ENCODE measurements at regions of chr17 and their contacts with region 1.

Region 1: DNA sequence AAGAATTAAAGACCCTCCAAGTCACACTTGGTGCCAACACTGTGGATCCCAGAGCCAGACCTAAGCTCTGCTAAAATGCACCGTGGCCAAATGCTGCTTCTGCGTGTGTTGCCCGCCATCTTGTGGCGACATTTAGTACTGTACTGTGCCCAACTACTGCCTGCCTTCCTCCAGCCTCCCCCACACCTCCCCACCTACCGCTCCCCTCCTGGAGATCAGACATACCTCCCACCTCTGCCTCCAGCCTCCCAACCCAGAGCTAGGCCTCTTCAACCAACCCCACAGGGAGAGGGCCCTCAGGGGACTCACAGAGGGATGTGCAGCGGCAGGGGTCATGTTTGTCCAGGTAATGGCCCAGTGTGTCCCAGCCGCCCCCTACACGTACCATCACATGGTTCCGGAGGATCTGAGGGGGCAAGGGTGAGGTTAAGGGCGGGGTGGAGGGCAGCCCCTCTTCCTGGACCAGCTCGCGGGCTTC is 5.5 kb downstream of the GAS2L2 start:
- DNase-seq: peak; percentile 86 to 95
- ATAC-seq: peak; percentile 71 to 91
- H3K4me3 ChIP-seq: no peak overlapping the region
- H3K27ac ChIP-seq: no peak overlapping the region
- H3K4me1 ChIP-seq: peaks cover 12% of the 10 kb centered on the region; the same call in 2 of the 3 replicates
- CTCF ChIP-seq: peak; percentile 96
- EP300 ChIP-seq: no peak
- POLR2A ChIP-seq: no peak
- RAD21 ChIP-seq: peak; percentile 97 to 99

Region 2: GRCh38 chr17:35531160-35531559 is 216.4 kb before region 1 on chr17:
- CTCF ChIA-PET with region 1: interaction called, 32 read pairs
- POLR2A ChIA-PET with region 1: no interaction called
- DNase-seq: no peak
- ATAC-seq: no peak
- H3K4me3 ChIP-seq: no peak overlapping the region
- H3K27ac ChIP-seq: no peak overlapping the region
- H3K4me1 ChIP-seq: no peaks in the 10 kb centered on the region
- CTCF ChIP-seq: no peak
- EP300 ChIP-seq: no peak
- POLR2A ChIP-seq: no peak
- RAD21 ChIP-seq: no peak

Region 3: DNA sequence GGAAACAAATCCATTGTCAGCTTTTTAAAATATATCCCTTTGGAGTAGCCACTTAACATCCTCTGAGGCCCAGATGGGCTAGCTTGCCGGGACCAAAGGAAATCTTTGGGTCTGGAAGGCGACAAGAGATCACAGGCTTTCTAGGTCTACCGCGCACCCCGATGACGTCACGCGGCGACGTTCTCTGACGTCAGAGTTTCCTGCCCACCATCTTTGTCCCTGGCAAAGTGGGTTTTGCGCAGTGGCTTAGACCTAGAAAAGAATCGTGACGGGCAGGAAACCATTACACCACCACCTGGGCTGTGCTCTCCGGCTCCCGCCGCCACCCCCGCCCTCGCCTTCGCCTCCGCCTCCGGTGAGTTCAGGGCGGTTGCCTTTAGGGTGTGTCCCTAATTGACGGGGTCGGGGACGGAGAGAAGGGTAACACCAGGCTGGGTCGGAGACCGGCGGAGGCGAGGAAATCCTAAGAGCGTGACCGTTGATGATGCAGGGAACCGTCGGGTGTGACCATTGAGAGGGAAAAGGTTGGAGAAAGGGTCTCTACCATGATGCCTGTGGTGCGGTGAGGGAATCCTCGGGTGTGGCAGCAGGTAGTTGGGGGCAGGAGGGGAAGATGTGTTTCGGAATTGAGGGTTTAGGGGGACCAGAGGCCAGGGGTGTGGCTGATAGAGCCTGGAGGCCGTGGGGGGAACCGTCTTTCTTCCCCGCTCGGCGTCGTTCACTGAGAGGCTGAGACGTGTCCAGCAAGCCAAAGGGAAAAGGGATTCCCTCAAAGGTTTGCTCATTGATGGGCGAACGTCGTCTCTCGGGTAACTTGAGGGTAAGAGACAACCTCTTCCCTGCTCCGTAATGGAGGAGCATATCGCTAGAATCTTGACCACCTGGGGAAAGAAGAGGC is 160.3 kb before region 1 on chr17 and contains the start of gene AP2B1:
- CTCF ChIA-PET with region 1: interaction called, 16 read pairs
- POLR2A ChIA-PET with region 1: interaction called, 4 read pairs
- DNase-seq: peak; percentile 95 to 99
- ATAC-seq: peak; percentile 88 to 91
- H3K4me3 ChIP-seq: peak within 1 kb of the TSS; percentile 73
- H3K27ac ChIP-seq: peak within 1 kb of the TSS; percentile 91 to 94
- H3K4me1 ChIP-seq: peaks cover 39% of the 10 kb centered on the region
- CTCF ChIP-seq: no peak
- EP300 ChIP-seq: no peak
- POLR2A ChIP-seq: peak; percentile 76
- RAD21 ChIP-seq: no peak
- polyA plus RNA-seq, gene AP2B1: 278 and 309 TPM in 2 replicates

Region 4: GRCh38 chr17:35630530-35631148 is 116.9 kb before region 1 on chr17:
- CTCF ChIA-PET with region 1: interaction called, 20 read pairs
- POLR2A ChIA-PET with region 1: no interaction called
- DNase-seq: peak in 1 of 2 experiments; percentile 9
- ATAC-seq: peak; percentile 24 to 51; a peak in 4 of 6 replicates
- H3K4me3 ChIP-seq: no peak overlapping the region
- H3K27ac ChIP-seq: no peak overlapping the region
- H3K4me1 ChIP-seq: peaks cover 16% of the 10 kb centered on the region; the same call in 2 of the 3 replicates
- CTCF ChIP-seq: no peak
- EP300 ChIP-seq: no peak
- POLR2A ChIP-seq: no peak
- RAD21 ChIP-seq: no peak

Region 5: DNA sequence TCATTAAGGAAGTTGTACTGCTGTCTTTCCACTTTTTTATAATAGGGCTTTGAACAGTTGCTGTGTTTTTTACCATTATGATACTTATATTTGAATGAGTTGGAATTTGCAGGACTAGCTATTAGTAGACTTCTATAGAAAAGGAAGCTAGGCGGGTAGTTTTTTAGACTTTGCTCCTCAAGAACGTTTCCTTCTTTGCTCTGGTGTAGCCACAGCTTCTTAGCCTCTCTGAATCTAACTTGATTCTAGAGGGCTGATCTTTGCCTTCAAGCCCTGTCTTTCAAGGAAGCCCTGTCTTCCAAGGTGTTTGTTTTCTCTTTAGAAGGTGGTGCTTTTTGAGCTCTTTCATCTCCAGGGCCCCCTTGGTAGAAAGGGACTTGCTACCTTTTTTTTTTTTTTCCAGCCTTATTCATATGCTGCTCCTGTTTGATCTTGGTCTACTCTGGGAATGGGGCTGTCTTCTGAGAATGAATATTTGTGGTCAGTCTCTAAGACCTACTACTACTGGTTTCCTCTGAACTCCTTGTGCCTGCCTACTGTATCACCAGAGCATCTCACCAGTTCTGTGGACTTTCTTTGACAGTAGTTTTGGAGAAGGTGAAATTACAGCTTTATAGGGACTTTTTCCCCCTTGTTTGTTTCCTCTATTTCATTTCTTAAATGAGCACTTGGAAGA is 68.4 kb before region 1 on chr17:
- CTCF ChIA-PET with region 1: interaction called, 13 read pairs
- POLR2A ChIA-PET with region 1: no interaction called
- DNase-seq: no peak
- ATAC-seq: no peak
- H3K4me3 ChIP-seq: no peak overlapping the region
- H3K27ac ChIP-seq: no peak overlapping the region
- H3K4me1 ChIP-seq: peaks cover 6% of the 10 kb centered on the region; the same call in 1 of the 3 replicates
- CTCF ChIP-seq: no peak
- EP300 ChIP-seq: no peak
- POLR2A ChIP-seq: no peak
- RAD21 ChIP-seq: no peak

Region 6: DNA sequence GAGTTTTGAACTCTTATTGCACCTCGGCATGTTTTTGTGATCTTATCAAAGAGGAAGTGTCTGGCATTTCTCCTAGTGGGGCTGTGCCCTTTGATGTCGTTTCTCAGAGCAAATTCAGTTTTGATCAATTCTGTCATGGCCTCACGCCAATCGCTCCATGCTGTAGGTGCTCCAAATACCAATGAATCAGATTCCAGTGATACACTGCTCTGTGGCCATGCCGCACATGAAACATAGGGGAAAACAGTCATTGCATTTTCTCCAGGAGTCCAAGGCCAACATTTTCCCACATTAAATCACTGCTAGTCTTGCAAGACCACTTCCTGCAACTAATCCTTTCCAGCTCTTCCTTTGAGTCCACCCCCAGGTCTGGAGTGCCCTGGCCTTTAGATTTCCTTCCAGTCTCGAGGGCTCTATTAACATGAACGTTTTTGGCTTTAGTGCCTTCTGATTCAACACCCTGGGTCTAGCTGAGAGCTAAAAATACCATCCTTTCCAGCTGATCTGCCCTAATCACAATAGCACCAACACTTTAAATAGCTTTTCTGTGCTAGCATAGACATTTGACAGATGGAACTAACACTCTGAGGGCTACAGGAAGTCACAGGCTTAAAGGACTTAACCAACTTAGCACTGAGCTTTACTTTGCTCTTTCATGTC is 34.4 kb before region 1 on chr17:
- CTCF ChIA-PET with region 1: interaction called, 377 read pairs
- POLR2A ChIA-PET with region 1: no interaction called
- DNase-seq: no peak
- ATAC-seq: no peak
- H3K4me3 ChIP-seq: no peak overlapping the region
- H3K27ac ChIP-seq: no peak overlapping the region
- H3K4me1 ChIP-seq: peaks cover 14% of the 10 kb centered on the region; the same call in 1 of the 3 replicates
- CTCF ChIP-seq: no peak
- EP300 ChIP-seq: no peak
- POLR2A ChIP-seq: no peak
- RAD21 ChIP-seq: no peak

Region 7: GRCh38 chr17:35865412-35866340 is 118.1 kb after region 1 on chr17:
- CTCF ChIA-PET with region 1: no interaction called
- POLR2A ChIA-PET with region 1: no interaction called
- DNase-seq: no peak
- ATAC-seq: no peak
- H3K4me3 ChIP-seq: no peak overlapping the region
- H3K27ac ChIP-seq: no peak overlapping the region
- H3K4me1 ChIP-seq: peaks cover 9% of the 10 kb centered on the region; the same call in 2 of the 3 replicates
- CTCF ChIP-seq: no peak
- EP300 ChIP-seq: no peak
- POLR2A ChIP-seq: no peak
- RAD21 ChIP-seq: no peak

Measured in A549 (cell line).